ENCODE measurements at regions of chr11 and their contacts with region 1.

Region 1: GRCh38 chr11:46006418-46007070 is 84.1 kb downstream of the LARGE2 start:
- DNase-seq: peak; percentile 63
- ATAC-seq: peak; percentile 94
- H3K4me3 ChIP-seq: no peak overlapping the region
- H3K27ac ChIP-seq: no peak overlapping the region
- H3K4me1 ChIP-seq: no peaks in the 10 kb centered on the region
- H3K27me3 ChIP-seq: no peaks in the 10 kb centered on the region
- CTCF ChIP-seq: peak; percentile 69 to 86 (median 70)
- POLR2A ChIP-seq: no peak
- RAD21 ChIP-seq: peak; percentile 81

Region 2: DNA sequence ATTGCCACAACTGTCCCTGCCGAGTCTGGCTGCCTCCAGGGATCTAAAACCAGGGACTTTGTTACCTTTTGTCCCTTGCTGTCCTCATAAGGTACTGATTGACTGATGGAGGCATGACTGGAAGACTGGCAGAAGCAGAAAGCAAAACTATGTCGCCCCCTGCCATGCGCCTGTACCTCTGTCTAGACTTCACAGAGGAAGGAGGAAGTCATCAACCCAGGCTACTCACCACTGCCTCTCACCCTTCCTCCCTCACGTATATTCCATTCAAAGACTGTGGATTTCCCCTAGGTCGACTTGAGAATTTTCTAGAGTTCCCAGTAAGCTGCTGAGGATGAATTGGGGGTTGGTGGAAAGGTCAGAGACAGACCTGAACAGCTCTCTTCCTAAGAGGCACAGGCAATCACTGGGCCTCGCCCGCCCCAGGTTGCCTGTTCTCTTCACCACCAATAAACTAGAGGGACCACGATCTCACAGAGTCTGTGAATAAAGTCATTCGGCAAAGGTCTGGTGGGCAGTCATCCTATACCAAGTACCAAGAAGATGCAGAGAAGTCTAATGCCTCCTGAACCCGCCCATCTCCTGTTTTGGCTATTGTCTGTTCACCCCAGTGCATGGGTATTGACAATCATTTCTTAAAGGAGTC is 313.6 kb before region 1 on chr11:
- CTCF ChIA-PET with region 1: no interaction called
- POLR2A ChIA-PET with region 1: no interaction called
- RAD21 ChIA-PET with region 1: no interaction called
- intact Hi-C with region 1: no loop called
- DNase-seq: no peak
- ATAC-seq: no peak
- H3K4me3 ChIP-seq: no peak overlapping the region
- H3K27ac ChIP-seq: no peak overlapping the region
- H3K4me1 ChIP-seq: no peaks in the 10 kb centered on the region
- H3K27me3 ChIP-seq: peaks cover 18% of the 10 kb centered on the region
- CTCF ChIP-seq: no peak
- POLR2A ChIP-seq: no peak
- RAD21 ChIP-seq: peak; percentile 20; the same call in 1 of the 2 replicates

Region 3: DNA sequence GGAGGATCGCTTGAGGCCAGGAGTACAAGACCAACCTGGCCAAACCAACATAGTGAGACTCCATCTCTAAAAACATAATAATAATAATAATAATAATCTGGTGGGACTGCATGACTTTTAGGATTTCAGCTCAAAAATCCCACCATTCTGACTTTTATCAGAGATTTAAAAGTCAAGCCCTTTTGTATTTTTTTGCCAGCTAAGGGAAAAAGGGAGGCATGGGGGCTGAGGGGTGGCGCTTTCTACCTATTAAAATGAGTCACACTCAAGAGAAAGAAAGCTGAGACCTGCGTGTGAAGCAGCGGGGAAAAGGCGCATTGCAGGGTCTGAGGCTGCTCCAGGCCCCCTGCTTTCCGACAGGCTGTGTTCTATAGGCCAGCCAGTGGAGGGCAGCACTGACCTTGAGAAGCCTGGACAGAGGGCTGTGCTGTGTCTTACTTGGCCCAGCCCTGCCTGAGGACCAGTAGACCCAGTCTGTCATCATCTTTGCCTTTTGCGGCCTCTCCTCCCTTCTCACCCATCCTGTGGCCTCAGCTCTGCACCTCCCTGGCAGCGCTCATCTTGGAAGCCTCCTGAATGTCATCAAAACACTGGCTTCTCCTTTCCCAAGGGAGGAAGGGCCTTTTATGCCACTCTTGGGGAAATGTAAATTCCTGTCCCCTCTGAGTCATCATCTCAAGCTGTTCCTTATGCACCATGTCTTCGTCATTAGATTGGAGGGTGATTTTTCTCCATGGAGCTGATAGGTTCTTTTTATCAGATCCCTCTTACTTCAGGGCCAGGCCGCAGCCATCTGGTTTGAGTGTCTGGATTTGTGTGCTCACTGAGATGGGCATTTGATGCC is 133.8 kb before region 1 on chr11:
- CTCF ChIA-PET with region 1: interaction called, 29 read pairs
- POLR2A ChIA-PET with region 1: no interaction called
- RAD21 ChIA-PET with region 1: interaction called in 1 of 2 experiments, 3 read pairs
- intact Hi-C with region 1: loop called (anchors 1 kb)
- DNase-seq: peak; percentile 41
- ATAC-seq: peak; percentile 99
- H3K4me3 ChIP-seq: no peak overlapping the region
- H3K27ac ChIP-seq: no peak overlapping the region
- H3K4me1 ChIP-seq: peaks cover 0 to 4% of the 10 kb centered on the region in 2 experiments; a peak in 1 of 4 replicates
- H3K27me3 ChIP-seq: no peaks in the 10 kb centered on the region
- CTCF ChIP-seq: peak; percentile 53 to 87 (median 77); a peak in 5 of 6 replicates
- POLR2A ChIP-seq: no peak
- RAD21 ChIP-seq: peak; percentile 84

Region 4: GRCh38 chr11:45964911-45965389 is 41.6 kb before region 1 on chr11:
- CTCF ChIA-PET with region 1: interaction called, 62 read pairs
- POLR2A ChIA-PET with region 1: no interaction called
- RAD21 ChIA-PET with region 1: interaction called, 6 to 8 read pairs
- intact Hi-C with region 1: loop called (anchors 2 kb)
- DNase-seq: peak; percentile 49
- ATAC-seq: peak; percentile 96
- H3K4me3 ChIP-seq: no peak overlapping the region
- H3K27ac ChIP-seq: no peak overlapping the region
- H3K4me1 ChIP-seq: no peaks in the 10 kb centered on the region
- H3K27me3 ChIP-seq: no peaks in the 10 kb centered on the region
- CTCF ChIP-seq: peak; percentile 74 to 94 (median 91)
- POLR2A ChIP-seq: no peak
- RAD21 ChIP-seq: peak; percentile 77

Region 5: DNA sequence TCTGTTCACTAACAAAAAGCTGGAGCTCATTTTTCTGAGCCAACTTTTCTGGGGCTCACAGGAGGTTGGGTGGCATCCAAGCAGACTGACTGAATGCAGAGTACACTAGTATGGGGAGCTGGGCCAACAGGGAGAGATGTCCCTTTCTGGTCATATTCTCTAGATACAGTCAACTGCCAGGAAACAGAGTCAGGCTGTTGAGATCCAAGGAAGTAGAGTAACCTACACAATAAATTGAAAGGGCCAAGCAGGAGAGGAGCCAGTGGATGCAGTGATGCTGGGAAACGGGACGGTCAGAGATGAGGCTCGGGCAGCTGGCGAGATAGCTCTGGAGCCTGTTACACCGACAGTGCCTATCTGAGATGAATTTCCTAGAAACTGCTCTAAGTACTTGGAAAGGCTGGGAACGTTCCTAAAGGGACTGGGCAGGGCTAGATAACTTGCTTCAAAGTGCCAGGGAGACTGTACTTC is 13.0 kb before region 1 on chr11:
- CTCF ChIA-PET with region 1: interaction called, 12 read pairs
- POLR2A ChIA-PET with region 1: no interaction called
- RAD21 ChIA-PET with region 1: no interaction called
- intact Hi-C with region 1: no loop called
- DNase-seq: no peak
- ATAC-seq: no peak
- H3K4me3 ChIP-seq: no peak overlapping the region
- H3K27ac ChIP-seq: no peak overlapping the region
- H3K4me1 ChIP-seq: no peaks in the 10 kb centered on the region
- H3K27me3 ChIP-seq: no peaks in the 10 kb centered on the region
- CTCF ChIP-seq: no peak
- POLR2A ChIP-seq: no peak
- RAD21 ChIP-seq: no peak

Region 6: GRCh38 chr11:46017341-46017740 is 10.8 kb after region 1 on chr11:
- CTCF ChIA-PET with region 1: interaction called, 10 read pairs
- POLR2A ChIA-PET with region 1: no interaction called
- RAD21 ChIA-PET with region 1: no interaction called
- intact Hi-C with region 1: no loop called
- DNase-seq: no peak
- ATAC-seq: no peak
- H3K4me3 ChIP-seq: no peak overlapping the region
- H3K27ac ChIP-seq: no peak overlapping the region
- H3K4me1 ChIP-seq: no peaks in the 10 kb centered on the region
- H3K27me3 ChIP-seq: no peaks in the 10 kb centered on the region
- CTCF ChIP-seq: no peak
- POLR2A ChIP-seq: no peak
- RAD21 ChIP-seq: no peak

Measured in HCT116 (cell line).